ENCODE measurements at regions of chr12 and their contacts with region 1.

Region 1: GRCh38 chr12:19129486-19130223 is at the start of gene PLEKHA5:
- DNase-seq: peak; percentile 56
- H3K4me3 Mint-ChIP-seq: peak within 1 kb of the TSS; percentile 86
- H3K27ac Mint-ChIP-seq: no peak within 1 kb of the TSS
- H3K4me1 Mint-ChIP-seq: peaks cover 23% of the 10 kb centered on the region
- H3K27me3 Mint-ChIP-seq: peaks cover 3% of the 10 kb centered on the region
- total RNA-seq, gene PLEKHA5: 6.6 to 7.4 TPM

Region 2: DNA sequence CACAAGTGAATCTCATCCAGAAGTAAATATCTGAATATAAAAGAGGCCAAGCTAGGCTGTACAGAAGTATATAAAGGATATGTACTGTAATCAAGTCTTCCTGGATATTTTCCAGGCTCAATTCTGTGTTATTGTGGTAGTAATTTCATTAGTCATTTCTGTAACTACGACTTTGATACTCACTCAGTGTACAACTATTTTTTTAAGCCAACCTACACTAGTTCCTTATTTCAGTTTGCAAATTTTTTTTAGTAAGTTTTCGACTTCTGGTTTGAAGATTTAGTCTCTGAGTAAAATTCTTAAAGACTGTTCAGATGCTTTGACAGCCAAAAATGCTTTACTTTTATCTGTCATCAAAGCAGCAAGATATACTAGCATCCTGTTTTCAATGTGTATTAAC is 260.9 kb before region 1 on chr12:
- CTCF ChIA-PET with region 1: no interaction called
- POLR2A ChIA-PET with region 1: no interaction called
- intact Hi-C with region 1: loop called (anchors 2 kb)
- DNase-seq: no peak
- H3K4me3 Mint-ChIP-seq: no peak overlapping the region
- H3K27ac Mint-ChIP-seq: no peak overlapping the region
- H3K4me1 Mint-ChIP-seq: peaks cover 23% of the 10 kb centered on the region
- H3K27me3 Mint-ChIP-seq: peaks cover 1% of the 10 kb centered on the region

Region 3: GRCh38 chr12:19085090-19085489 is 44.6 kb before region 1 on chr12:
- CTCF ChIA-PET with region 1: no interaction called
- POLR2A ChIA-PET with region 1: no interaction called
- intact Hi-C with region 1: no loop called
- DNase-seq: no peak
- H3K4me3 Mint-ChIP-seq: no peak overlapping the region
- H3K27ac Mint-ChIP-seq: no peak overlapping the region
- H3K4me1 Mint-ChIP-seq: peaks cover 5% of the 10 kb centered on the region
- H3K27me3 Mint-ChIP-seq: peaks cover 1% of the 10 kb centered on the region

Region 4: DNA sequence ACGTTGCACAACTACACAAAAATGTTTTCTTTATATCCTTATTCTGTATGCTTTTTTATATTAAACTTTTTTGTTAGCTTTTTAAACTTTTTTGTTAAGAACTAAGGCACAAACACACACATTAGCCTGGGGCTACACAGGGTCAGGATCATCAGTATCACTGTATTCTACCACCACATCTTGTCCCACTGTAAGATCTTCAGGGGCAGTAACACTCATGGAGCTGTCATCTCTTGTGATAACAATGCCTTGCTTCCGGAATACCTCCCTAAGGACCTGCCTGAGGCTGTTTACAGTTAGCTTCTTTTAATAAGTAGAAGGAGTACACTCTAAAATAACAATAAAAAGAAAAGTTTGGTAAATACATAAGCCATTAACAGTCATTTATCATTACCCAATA is 42.1 kb after region 1 on chr12:
- CTCF ChIA-PET with region 1: no interaction called
- POLR2A ChIA-PET with region 1: no interaction called
- intact Hi-C with region 1: loop called (anchors 2 kb)
- DNase-seq: no peak
- H3K4me3 Mint-ChIP-seq: no peak overlapping the region
- H3K27ac Mint-ChIP-seq: no peak overlapping the region
- H3K4me1 Mint-ChIP-seq: peaks cover 5% of the 10 kb centered on the region
- H3K27me3 Mint-ChIP-seq: no peaks in the 10 kb centered on the region

Measured in activated CD4-positive, alpha-beta memory T cell treated with anti-CD3 and anti-CD28 coated beads for 36 hours (primary cell).